Activated naive CD4-positive, alpha-beta T cell treated with anti-CD3 and anti-CD28 coated beads for 36 hours (primary cell): ENCODE measurements at regions of chr1 and their contacts with region 1.

Region 1: DNA sequence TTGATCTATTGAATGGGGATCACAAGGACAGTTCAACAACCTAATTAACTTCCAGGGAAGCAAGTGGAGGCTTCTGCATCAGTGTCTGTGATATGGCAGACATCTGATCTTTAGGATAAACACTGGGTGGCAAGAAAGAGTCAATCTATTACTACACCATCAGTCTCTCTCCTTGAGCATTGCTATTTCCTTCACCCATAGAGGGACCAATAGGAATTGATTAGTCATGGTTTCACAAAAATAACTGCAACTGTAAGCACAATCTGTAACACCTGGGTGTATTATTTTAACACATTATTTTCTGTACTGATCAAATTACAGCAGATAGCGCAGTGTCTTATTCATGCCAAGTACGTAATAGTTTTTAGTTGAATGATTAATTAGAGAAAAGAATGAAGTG is 50.3 kb downstream of the USP24 start:
- DNase-seq: no peak
- H3K4me3 Mint-ChIP-seq: no peak overlapping the region
- H3K27ac Mint-ChIP-seq: peak overlapping the region; percentile 60
- H3K4me1 Mint-ChIP-seq: peaks cover 46% of the 10 kb centered on the region
- H3K27me3 Mint-ChIP-seq: no peaks in the 10 kb centered on the region

Region 2: DNA sequence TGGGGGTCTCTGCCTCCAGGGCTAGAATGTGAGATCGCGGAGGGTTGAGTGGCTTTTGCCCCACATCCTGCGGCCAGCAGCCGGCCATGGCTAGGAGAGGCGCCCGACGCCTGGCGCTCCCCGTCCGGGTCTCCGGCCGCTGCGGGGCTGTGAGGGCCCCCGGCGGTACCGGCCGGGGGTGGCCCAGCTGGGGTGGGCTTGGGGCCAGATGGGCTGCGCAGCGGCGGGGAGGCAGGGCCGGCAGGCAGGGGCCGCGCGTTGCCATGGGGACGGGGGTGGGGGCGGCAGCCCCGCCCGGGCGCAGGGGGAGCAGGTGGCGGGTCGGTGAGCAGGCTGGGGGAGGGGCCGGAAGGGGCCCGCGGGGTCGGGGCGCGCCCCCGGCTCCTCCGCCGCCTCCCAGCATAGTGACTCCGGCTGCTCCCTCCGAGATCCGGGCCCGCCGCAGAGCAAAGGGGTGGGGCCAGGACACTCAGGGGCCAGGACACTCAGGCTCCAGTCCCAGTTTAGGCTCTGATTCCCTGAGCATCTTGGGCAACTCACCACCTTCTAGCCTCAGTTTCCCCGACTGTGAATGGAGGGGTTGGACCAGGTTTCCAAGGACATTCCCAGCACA is 690.2 kb before region 1 on chr1:
- CTCF ChIA-PET with region 1: no interaction called
- intact Hi-C with region 1: no loop called
- DNase-seq: peak; percentile 57
- H3K4me3 Mint-ChIP-seq: peak overlapping the region; percentile 64
- H3K27ac Mint-ChIP-seq: no peak overlapping the region
- H3K4me1 Mint-ChIP-seq: peaks cover 43% of the 10 kb centered on the region
- H3K27me3 Mint-ChIP-seq: no peaks in the 10 kb centered on the region

Region 3: GRCh38 chr1:55150880-55151588 is 13.9 kb before region 1 on chr1:
- CTCF ChIA-PET with region 1: interaction called, 3 read pairs
- intact Hi-C with region 1: loop called (anchors 2 kb)
- DNase-seq: no peak
- H3K4me3 Mint-ChIP-seq: peak overlapping the region; percentile 38
- H3K27ac Mint-ChIP-seq: peak overlapping the region; percentile 92
- H3K4me1 Mint-ChIP-seq: peaks cover 33% of the 10 kb centered on the region
- H3K27me3 Mint-ChIP-seq: no peaks in the 10 kb centered on the region

Region 4: GRCh38 chr1:55181666-55182065 is 16.8 kb after region 1 on chr1:
- CTCF ChIA-PET with region 1: no interaction called
- intact Hi-C with region 1: loop called (anchors 2 kb)
- DNase-seq: no peak
- H3K4me3 Mint-ChIP-seq: no peak overlapping the region
- H3K27ac Mint-ChIP-seq: no peak overlapping the region
- H3K4me1 Mint-ChIP-seq: peaks cover 47% of the 10 kb centered on the region
- H3K27me3 Mint-ChIP-seq: no peaks in the 10 kb centered on the region

Region 5: GRCh38 chr1:55257958-55258357 is 93.1 kb after region 1 on chr1:
- CTCF ChIA-PET with region 1: no interaction called
- intact Hi-C with region 1: no loop called
- DNase-seq: peak; percentile 79
- H3K4me3 Mint-ChIP-seq: no peak overlapping the region
- H3K27ac Mint-ChIP-seq: no peak overlapping the region
- H3K4me1 Mint-ChIP-seq: peaks cover 19% of the 10 kb centered on the region
- H3K27me3 Mint-ChIP-seq: no peaks in the 10 kb centered on the region